ENCODE measurements at regions of chr14 and their contacts with region 1.

Region 1: GRCh38 chr14:24058260-24058950 is 6.6 kb downstream of the CARMIL3 start:
- DNase-seq: peak; percentile 53 to 74
- ATAC-seq: peak; percentile 82 to 95 (median 92)
- H3K4me3 ChIP-seq: no peak overlapping the region
- H3K27ac ChIP-seq: no peak overlapping the region
- H3K4me1 ChIP-seq: no peaks in the 10 kb centered on the region
- H3K27me3 ChIP-seq: peaks cover 0 to 25% (median 0%) of the 10 kb centered on the region in 3 donors
- CTCF ChIP-seq: peak; percentile 93

Region 2: GRCh38 chr14:24093901-24094761 is 35.7 kb after region 1 on chr14 and contains the start of gene PCK2:
- intact Hi-C with region 1: loop called (anchors 1 to 2 kb)
- DNase-seq: peak; percentile 94 to 96
- ATAC-seq: peak; percentile 87 to 92 (median 88)
- H3K4me3 ChIP-seq: peak within 1 kb of the TSS; percentile 80
- H3K27ac ChIP-seq: peak within 1 kb of the TSS; percentile 75
- H3K4me1 ChIP-seq: peaks cover 6% of the 10 kb centered on the region
- H3K27me3 ChIP-seq: no peaks in the 10 kb centered on the region
- CTCF ChIP-seq: no peak
- total RNA-seq, gene PCK2: 2.1 to 4.5 (median 2.7) TPM

Region 3: GRCh38 chr14:24108336-24108874 is 50.0 kb after region 1 on chr14:
- intact Hi-C with region 1: loop called in 1 of 2 experiments (anchors 1 kb)
- DNase-seq: no peak
- ATAC-seq: no peak
- H3K4me3 ChIP-seq: no peak overlapping the region
- H3K27ac ChIP-seq: no peak overlapping the region
- H3K4me1 ChIP-seq: peaks cover 9% of the 10 kb centered on the region
- H3K27me3 ChIP-seq: no peaks in the 10 kb centered on the region
- CTCF ChIP-seq: no peak

Region 4: GRCh38 chr14:24160850-24161804 is 102.7 kb after region 1 on chr14 and contains the start of gene IRF9:
- intact Hi-C with region 1: loop called in 1 of 2 experiments (anchors 2 kb)
- DNase-seq: peak; percentile 95 to 97
- ATAC-seq: peak; percentile 90 to 93 (median 91)
- H3K4me3 ChIP-seq: peak within 1 kb of the TSS; percentile 74
- H3K27ac ChIP-seq: peak within 1 kb of the TSS; percentile 86
- H3K4me1 ChIP-seq: peaks cover 19% of the 10 kb centered on the region
- H3K27me3 ChIP-seq: no peaks in the 10 kb centered on the region
- CTCF ChIP-seq: peak; percentile 96
- total RNA-seq, gene IRF9: 10.4 to 21.6 (median 15.1) TPM

Region 5: DNA sequence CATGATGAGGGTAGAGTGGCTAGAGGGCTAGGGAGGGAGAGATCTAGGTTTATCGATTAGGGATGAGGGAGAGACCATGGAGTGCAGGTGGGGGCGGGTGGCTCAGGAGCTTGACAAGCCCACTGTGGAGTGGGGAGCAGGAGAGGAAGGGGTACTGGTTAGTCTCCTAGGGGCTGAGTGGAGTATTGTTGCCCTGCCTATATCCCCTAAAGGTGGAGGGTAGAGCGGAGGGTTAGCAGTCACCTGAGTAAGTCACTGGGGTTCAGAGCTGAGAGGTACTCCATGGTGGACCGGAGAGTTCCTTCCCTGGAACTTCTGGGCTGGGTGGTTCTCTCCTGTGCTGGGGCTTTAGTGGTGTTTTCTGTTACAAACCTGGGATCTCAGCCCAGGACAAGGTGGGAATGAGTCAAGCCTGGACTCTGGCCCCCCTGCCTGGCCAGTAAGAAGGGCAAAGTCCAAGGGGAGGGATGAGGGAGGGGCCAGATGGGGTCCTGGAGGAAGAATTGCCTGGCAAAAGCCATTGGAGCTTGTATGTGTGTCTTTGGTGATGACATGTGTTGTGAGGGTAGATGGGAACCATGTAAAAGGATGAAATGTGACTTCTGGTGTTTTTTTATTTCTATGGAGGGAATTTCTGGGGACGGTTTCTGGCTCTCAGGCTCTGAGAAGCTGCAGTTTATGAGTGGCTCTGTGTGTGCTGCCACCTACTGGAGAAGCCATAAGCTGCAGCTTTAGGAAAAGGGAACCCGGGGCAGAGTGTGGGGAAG is 249.4 kb after region 1 on chr14 and contains the start of gene CIDEB:
- intact Hi-C with region 1: loop called in 1 of 2 experiments (anchors 5 kb)
- DNase-seq: peak in 1 of 2 donors; percentile 53
- ATAC-seq: peak in 3 of 4 donors; percentile 35 to 57 (median 42)
- H3K4me3 ChIP-seq: no peak within 1 kb of the TSS
- H3K27ac ChIP-seq: no peak within 1 kb of the TSS
- H3K4me1 ChIP-seq: peaks cover 13% of the 10 kb centered on the region
- H3K27me3 ChIP-seq: no peaks in the 10 kb centered on the region
- CTCF ChIP-seq: peak; percentile 81
- total RNA-seq, gene CIDEB: 0.95 to 2.5 (median 1.8) TPM

Measured in psoas muscle (tissue), 8 donors.